ENCODE measurements at regions of chr16 and their contacts with region 1.

Region 1: GRCh38 chr16:30628627-30629540 is 18.7 kb upstream of the ZNF689 start:
- DNase-seq: peak; percentile 72 to 83 (median 80)
- H3K4me3 ChIP-seq: peak overlapping the region in 1 of 2 donors; percentile 48
- H3K4me3 Mint-ChIP-seq: peak overlapping the region; percentile 67 to 86 (median 78)
- H3K27ac ChIP-seq: no peak overlapping the region
- H3K27ac Mint-ChIP-seq: peak overlapping the region; percentile 38 to 95 (median 87)
- H3K4me1 ChIP-seq: peaks cover 9% of the 10 kb centered on the region
- H3K4me1 Mint-ChIP-seq: peaks cover 4 to 9% (median 7%) of the 10 kb centered on the region in 4 donors
- H3K27me3 ChIP-seq: no peaks in the 10 kb centered on the region
- H3K27me3 Mint-ChIP-seq: peaks cover 0 to under 1% of the 10 kb centered on the region in 2 donors

Region 2: GRCh38 chr16:30571695-30572600 is 56.9 kb before region 1 on chr16 and contains the start of gene ZNF688:
- CTCF ChIA-PET with region 1: interaction called, 6 read pairs
- POLR2A ChIA-PET with region 1: interaction called, 8 read pairs
- intact Hi-C with region 1: loop called (anchors 5 kb)
- DNase-seq: peak; percentile 94 to 100 (median 97)
- H3K4me3 ChIP-seq: peak within 1 kb of the TSS; percentile 65 to 71
- H3K4me3 Mint-ChIP-seq: peak within 1 kb of the TSS; percentile 86 to 96 (median 91)
- H3K27ac ChIP-seq: peak within 1 kb of the TSS; percentile 90
- H3K27ac Mint-ChIP-seq: peak within 1 kb of the TSS; percentile 96 to 97 (median 97)
- H3K4me1 ChIP-seq: peaks cover 50% of the 10 kb centered on the region
- H3K4me1 Mint-ChIP-seq: peaks cover 22 to 51% (median 36%) of the 10 kb centered on the region in 4 donors
- H3K27me3 ChIP-seq: no peaks in the 10 kb centered on the region
- H3K27me3 Mint-ChIP-seq: no peaks in the 10 kb centered on the region
- total RNA-seq, gene ZNF688: 21.4 to 22.7 TPM

Region 3: GRCh38 chr16:30585400-30586189 is 43.3 kb before region 1 on chr16 and contains the start of gene ZNF785:
- CTCF ChIA-PET with region 1: interaction called, 11 read pairs
- POLR2A ChIA-PET with region 1: interaction called, 5 read pairs
- intact Hi-C with region 1: no loop called
- DNase-seq: peak; percentile 94 to 96 (median 95)
- H3K4me3 ChIP-seq: peak within 1 kb of the TSS; percentile 73 to 97
- H3K4me3 Mint-ChIP-seq: peak within 1 kb of the TSS; percentile 87 to 96 (median 91)
- H3K27ac ChIP-seq: peak within 1 kb of the TSS; percentile 79
- H3K27ac Mint-ChIP-seq: peak within 1 kb of the TSS; percentile 76 to 96 (median 93)
- H3K4me1 ChIP-seq: peaks cover 21% of the 10 kb centered on the region
- H3K4me1 Mint-ChIP-seq: peaks cover 9 to 38% (median 26%) of the 10 kb centered on the region in 4 donors
- H3K27me3 ChIP-seq: no peaks in the 10 kb centered on the region
- H3K27me3 Mint-ChIP-seq: no peaks in the 10 kb centered on the region
- total RNA-seq, gene ZNF785: 33.4 to 34.2 TPM

Region 4: DNA sequence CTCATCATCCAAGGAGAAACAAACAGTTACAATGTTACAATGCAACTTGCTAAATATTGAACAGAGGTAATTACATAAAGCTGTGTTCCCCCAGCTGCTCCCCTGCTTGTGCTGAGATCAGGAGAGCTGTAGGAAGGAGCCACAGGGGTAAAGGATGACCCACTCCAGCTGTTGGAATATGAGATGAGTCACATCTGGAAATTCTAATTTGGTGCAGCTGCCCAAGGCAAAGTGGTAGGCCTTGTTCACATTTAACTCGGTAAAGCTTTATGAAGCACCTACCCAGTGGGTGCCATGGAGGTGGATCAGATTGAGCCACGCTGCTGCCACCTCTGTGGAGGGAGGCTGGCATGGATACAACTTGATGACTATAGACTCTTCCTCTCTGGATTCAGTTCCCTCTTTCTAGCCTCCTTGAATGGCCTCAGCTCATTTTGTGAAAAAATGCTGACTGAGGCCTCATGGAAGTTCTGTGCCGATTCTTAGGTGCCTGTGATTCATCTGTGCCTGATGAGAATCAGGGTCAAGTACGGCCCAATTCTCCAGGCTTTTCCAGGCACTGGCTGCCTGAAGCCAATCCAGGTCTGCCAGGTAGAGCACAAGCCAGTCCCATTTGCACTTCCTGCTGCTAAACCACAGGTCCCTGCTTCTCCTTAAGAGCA is 26.1 kb before region 1 on chr16:
- CTCF ChIA-PET with region 1: interaction called, 29 read pairs
- POLR2A ChIA-PET with region 1: interaction called, 4 read pairs
- intact Hi-C with region 1: no loop called
- DNase-seq: no peak
- H3K4me3 ChIP-seq: no peak overlapping the region
- H3K4me3 Mint-ChIP-seq: no peak overlapping the region
- H3K27ac ChIP-seq: no peak overlapping the region
- H3K27ac Mint-ChIP-seq: peak overlapping the region in 3 of 7 donors; percentile 23 to 52 (median 42)
- H3K4me1 ChIP-seq: peaks cover 3% of the 10 kb centered on the region
- H3K4me1 Mint-ChIP-seq: peaks cover 2 to 9% (median 5%) of the 10 kb centered on the region in 4 donors
- H3K27me3 ChIP-seq: no peaks in the 10 kb centered on the region
- H3K27me3 Mint-ChIP-seq: no peaks in the 10 kb centered on the region

Region 5: GRCh38 chr16:30609926-30610839 is 18.7 kb before region 1 on chr16 and contains the start of gene ZNF689:
- CTCF ChIA-PET with region 1: interaction called, 29 read pairs
- POLR2A ChIA-PET with region 1: interaction called, 7 read pairs
- intact Hi-C with region 1: loop called (anchors 1 kb)
- DNase-seq: peak; percentile 92 to 98 (median 95)
- H3K4me3 ChIP-seq: peak within 1 kb of the TSS; percentile 71 to 99
- H3K4me3 Mint-ChIP-seq: peak within 1 kb of the TSS; percentile 85 to 96 (median 94)
- H3K27ac ChIP-seq: peak within 1 kb of the TSS; percentile 97
- H3K27ac Mint-ChIP-seq: peak within 1 kb of the TSS; percentile 93 to 98 (median 96)
- H3K4me1 ChIP-seq: peaks cover 21% of the 10 kb centered on the region
- H3K4me1 Mint-ChIP-seq: peaks cover 10 to 18% (median 13%) of the 10 kb centered on the region in 4 donors
- H3K27me3 ChIP-seq: no peaks in the 10 kb centered on the region
- H3K27me3 Mint-ChIP-seq: no peaks in the 10 kb centered on the region
- total RNA-seq, gene ZNF689: 13.1 to 14.5 TPM

Region 6: GRCh38 chr16:30692381-30693064 is 63.6 kb after region 1 on chr16:
- CTCF ChIA-PET with region 1: interaction called, 24 read pairs
- POLR2A ChIA-PET with region 1: interaction called, 5 read pairs
- intact Hi-C with region 1: no loop called
- DNase-seq: no peak
- H3K4me3 ChIP-seq: no peak overlapping the region
- H3K4me3 Mint-ChIP-seq: no peak overlapping the region
- H3K27ac ChIP-seq: no peak overlapping the region
- H3K27ac Mint-ChIP-seq: peak overlapping the region in 5 of 7 donors; percentile 20 to 62 (median 29)
- H3K4me1 ChIP-seq: peaks cover 14% of the 10 kb centered on the region
- H3K4me1 Mint-ChIP-seq: peaks cover 8 to 19% (median 12%) of the 10 kb centered on the region in 4 donors
- H3K27me3 ChIP-seq: no peaks in the 10 kb centered on the region
- H3K27me3 Mint-ChIP-seq: no peaks in the 10 kb centered on the region

Region 7: GRCh38 chr16:30813821-30814189 is 184.9 kb after region 1 on chr16:
- CTCF ChIA-PET with region 1: no interaction called
- POLR2A ChIA-PET with region 1: no interaction called
- intact Hi-C with region 1: no loop called
- DNase-seq: no peak
- H3K4me3 ChIP-seq: peak overlapping the region; percentile 61 to 64
- H3K4me3 Mint-ChIP-seq: peak overlapping the region; percentile 88 to 93 (median 89)
- H3K27ac ChIP-seq: peak overlapping the region; percentile 57
- H3K27ac Mint-ChIP-seq: peak overlapping the region; percentile 81 to 91 (median 90)
- H3K4me1 ChIP-seq: peaks cover 13% of the 10 kb centered on the region
- H3K4me1 Mint-ChIP-seq: peaks cover 8 to 17% (median 12%) of the 10 kb centered on the region in 4 donors
- H3K27me3 ChIP-seq: no peaks in the 10 kb centered on the region
- H3K27me3 Mint-ChIP-seq: no peaks in the 10 kb centered on the region